ENCODE measurements at regions of chrX and their contacts with region 1.

Region 1: DNA sequence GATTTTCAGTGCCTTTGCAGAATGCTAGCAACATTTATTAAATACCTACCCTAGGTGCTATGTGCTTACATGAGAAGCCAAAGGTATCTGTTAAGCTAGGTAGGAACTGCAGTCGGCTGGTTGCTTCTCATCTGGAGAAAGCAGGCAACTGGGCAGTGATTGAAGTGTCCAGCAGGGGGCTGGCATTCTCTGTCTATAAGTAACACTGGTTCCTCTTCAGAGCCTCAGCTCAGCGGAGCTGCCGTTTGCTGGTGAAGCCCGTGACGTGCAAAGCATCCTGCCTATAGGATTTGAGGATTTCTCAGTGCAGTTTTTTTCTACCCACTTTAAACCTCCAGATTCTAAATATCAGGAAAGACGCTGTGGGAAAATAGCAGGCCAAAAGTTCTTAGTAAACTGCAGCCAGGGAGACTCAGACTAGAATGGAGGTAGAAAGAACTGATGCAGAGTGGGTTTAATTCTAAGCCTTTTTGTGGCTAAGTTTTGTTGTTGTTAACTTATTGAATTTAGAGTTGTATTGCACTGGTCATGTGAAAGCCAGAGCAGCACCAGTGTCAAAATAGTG is at the start of gene GRPR:
- DNase-seq: peak; percentile 77
- H3K4me3 ChIP-seq: no peak within 1 kb of the TSS
- H3K27ac ChIP-seq: no peak within 1 kb of the TSS
- H3K4me1 ChIP-seq: no peaks in the 10 kb centered on the region
- H3K27me3 ChIP-seq: peaks cover 0 to 5% of the 10 kb centered on the region in 2 experiments
- CTCF ChIP-seq: peak; percentile 69 to 70
- POLR2A ChIP-seq: no peak
- total RNA-seq, gene GRPR: 0.28 TPM in 1 of 2 replicates, not detected in the other

Region 2: DNA sequence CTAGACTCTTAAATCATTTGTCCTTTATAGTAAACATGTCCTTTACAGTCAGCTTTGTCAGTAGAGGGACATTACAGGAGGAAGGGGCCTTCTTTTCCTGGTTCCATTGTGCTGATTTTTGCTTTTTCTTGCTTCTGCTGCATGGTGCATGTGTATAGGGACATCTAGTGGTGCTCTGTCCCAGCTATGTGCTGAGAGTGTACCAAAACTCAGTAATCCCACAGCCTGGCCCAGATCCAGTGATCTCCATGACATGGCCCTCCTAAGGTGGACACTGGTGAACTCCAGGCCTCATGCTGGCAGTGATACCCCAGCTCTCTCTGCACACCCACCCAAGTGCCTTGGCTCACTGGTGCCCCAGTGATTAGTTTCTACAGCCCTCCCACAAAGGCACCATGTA is 89.1 kb after region 1 on chrX:
- CTCF ChIA-PET with region 1: interaction called, 50 read pairs
- POLR2A ChIA-PET with region 1: no interaction called
- dilution Hi-C with region 1: no loop called
- intact Hi-C with region 1: loop called (anchors 1 kb)
- DNase-seq: peak; percentile 35
- H3K4me3 ChIP-seq: no peak overlapping the region
- H3K27ac ChIP-seq: no peak overlapping the region
- H3K4me1 ChIP-seq: no peaks in the 10 kb centered on the region
- H3K27me3 ChIP-seq: no peaks in the 10 kb centered on the region
- CTCF ChIP-seq: peak; percentile 28 to 37
- POLR2A ChIP-seq: no peak

Region 3: GRCh38 chrX:16445166-16445752 is 322.0 kb after region 1 on chrX:
- CTCF ChIA-PET with region 1: interaction called, 9 read pairs
- POLR2A ChIA-PET with region 1: no interaction called
- dilution Hi-C with region 1: no loop called
- intact Hi-C with region 1: loop called (anchors 10 kb)
- DNase-seq: peak; percentile 17
- H3K4me3 ChIP-seq: no peak overlapping the region
- H3K27ac ChIP-seq: no peak overlapping the region
- H3K4me1 ChIP-seq: no peaks in the 10 kb centered on the region
- H3K27me3 ChIP-seq: no peaks in the 10 kb centered on the region
- CTCF ChIP-seq: peak; percentile 46 to 54
- POLR2A ChIP-seq: no peak

Region 4: GRCh38 chrX:16695079-16695676 is 571.9 kb after region 1 on chrX:
- CTCF ChIA-PET with region 1: interaction called, 4 read pairs
- POLR2A ChIA-PET with region 1: no interaction called
- dilution Hi-C with region 1: no loop called
- intact Hi-C with region 1: loop called (anchors 1 kb)
- DNase-seq: peak; percentile 55
- H3K4me3 ChIP-seq: no peak overlapping the region
- H3K27ac ChIP-seq: no peak overlapping the region
- H3K4me1 ChIP-seq: no peaks in the 10 kb centered on the region
- H3K27me3 ChIP-seq: no peaks in the 10 kb centered on the region
- CTCF ChIP-seq: peak; percentile 61 to 63
- POLR2A ChIP-seq: no peak

Region 5: DNA sequence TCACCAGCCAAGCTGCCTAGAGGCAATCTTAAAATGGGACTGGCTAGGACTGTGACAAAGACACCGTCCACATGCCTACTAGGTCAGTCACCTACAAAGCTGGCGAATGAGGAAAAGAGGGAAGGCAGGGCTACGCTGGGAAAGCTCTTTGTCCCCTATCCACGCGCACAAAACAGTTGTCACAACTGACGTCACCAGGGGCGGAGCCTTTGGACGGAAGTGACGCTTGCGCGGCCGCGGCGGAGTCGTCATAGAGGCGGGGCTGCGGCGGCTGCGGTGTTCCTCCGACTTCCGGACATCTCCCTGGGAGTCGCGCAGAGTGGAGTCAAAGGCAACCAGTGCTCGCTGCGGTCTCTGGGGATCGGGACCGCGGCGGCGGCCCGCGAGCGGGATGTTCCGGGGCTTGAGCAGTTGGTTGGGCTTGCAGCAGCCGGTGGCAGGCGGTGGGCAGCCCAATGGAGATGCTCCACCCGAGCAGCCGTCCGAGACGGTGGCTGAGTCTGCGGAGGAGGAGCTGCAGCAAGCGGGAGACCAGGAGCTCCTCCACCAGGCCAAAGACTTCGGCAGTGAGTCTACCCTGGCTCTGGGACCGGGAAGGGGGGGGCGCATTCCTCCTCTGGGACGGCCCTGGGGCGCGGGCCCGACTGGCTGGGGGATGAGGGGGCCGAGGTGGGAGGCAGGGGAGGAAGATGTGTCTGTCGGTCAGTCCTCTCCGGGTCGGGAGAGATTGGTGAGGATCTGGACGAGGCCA is 596.2 kb after region 1 on chrX and contains the start of gene SYAP1:
- CTCF ChIA-PET with region 1: no interaction called
- POLR2A ChIA-PET with region 1: no interaction called
- dilution Hi-C with region 1: no loop called
- intact Hi-C with region 1: no loop called
- DNase-seq: peak; percentile 95
- H3K4me3 ChIP-seq: peak within 1 kb of the TSS; percentile 42 to 72 (median 63)
- H3K27ac ChIP-seq: peak within 1 kb of the TSS; percentile 94
- H3K4me1 ChIP-seq: peaks cover 4% of the 10 kb centered on the region
- H3K27me3 ChIP-seq: no peaks in the 10 kb centered on the region
- CTCF ChIP-seq: no peak
- POLR2A ChIP-seq: peak; percentile 88
- total RNA-seq, gene SYAP1: 21.9 and 22.2 TPM in 2 replicates

Measured in endothelial cell of umbilical vein (primary cell).